Naive thymus-derived CD8-positive, alpha-beta T cell (primary cell): ENCODE measurements at regions of chr6 and their contacts with region 1.

Region 1: GRCh38 chr6:42928986-42929820 is at the start of gene CNPY3:
- DNase-seq: peak; percentile 87 to 97 (median 94)
- ATAC-seq: peak; percentile 82
- H3K4me3 Mint-ChIP-seq: peak within 1 kb of the TSS; percentile 92 to 100 (median 96)
- H3K27ac Mint-ChIP-seq: peak within 1 kb of the TSS; percentile 97 to 100 (median 99)
- H3K4me1 Mint-ChIP-seq: peaks cover 32 to 59% (median 55%) of the 10 kb centered on the region in 4 donors
- H3K27me3 Mint-ChIP-seq: no peaks in the 10 kb centered on the region
- polyA plus RNA-seq, gene CNPY3: 90.3 to 158 (median 124) TPM

Region 2: GRCh38 chr6:42050266-42051032 is 878.8 kb before region 1 on chr6 and contains the start of gene TAF8:
- POLR2A ChIA-PET with region 1: interaction called, 10 read pairs
- DNase-seq: peak; percentile 81 to 96 (median 86)
- ATAC-seq: peak; percentile 57 to 61
- H3K4me3 Mint-ChIP-seq: peak within 1 kb of the TSS; percentile 94 to 99 (median 98)
- H3K27ac Mint-ChIP-seq: peak within 1 kb of the TSS; percentile 94 to 99 (median 96)
- H3K4me1 Mint-ChIP-seq: peaks cover 15 to 83% (median 62%) of the 10 kb centered on the region in 4 donors
- H3K27me3 Mint-ChIP-seq: no peaks in the 10 kb centered on the region
- polyA plus RNA-seq, gene TAF8: 24.4 to 36.8 (median 28.6) TPM

Region 3: GRCh38 chr6:42782622-42783176 is 146.5 kb before region 1 on chr6:
- POLR2A ChIA-PET with region 1: interaction called, 11 read pairs
- DNase-seq: peak in 9 of 10 donors; percentile 68 to 93 (median 75)
- ATAC-seq: peak; percentile 49 to 61
- H3K4me3 Mint-ChIP-seq: peak overlapping the region in 9 of 10 donors; percentile 95 to 100 (median 99)
- H3K27ac Mint-ChIP-seq: peak overlapping the region in 8 of 10 donors; percentile 98 to 100 (median 100)
- H3K4me1 Mint-ChIP-seq: peaks cover 12 to 30% (median 22%) of the 10 kb centered on the region in 4 donors
- H3K27me3 Mint-ChIP-seq: no peaks in the 10 kb centered on the region

Region 4: GRCh38 chr6:42796171-42796570 is 133.0 kb before region 1 on chr6:
- POLR2A ChIA-PET with region 1: no interaction called
- DNase-seq: no peak
- ATAC-seq: peak in 1 of 2 donors; percentile 24
- H3K4me3 Mint-ChIP-seq: peak overlapping the region in 1 of 10 donors; percentile 55
- H3K27ac Mint-ChIP-seq: peak overlapping the region in 9 of 10 donors; percentile 2 to 78 (median 27)
- H3K4me1 Mint-ChIP-seq: peaks cover 11 to 31% (median 25%) of the 10 kb centered on the region in 4 donors
- H3K27me3 Mint-ChIP-seq: no peaks in the 10 kb centered on the region

Region 5: GRCh38 chr6:42963855-42964605 is 34.8 kb after region 1 on chr6:
- POLR2A ChIA-PET with region 1: interaction called, 16 read pairs
- DNase-seq: peak in 4 of 10 donors; percentile 10 to 44 (median 29)
- ATAC-seq: no peak
- H3K4me3 Mint-ChIP-seq: peak overlapping the region in 1 of 10 donors; percentile 6
- H3K27ac Mint-ChIP-seq: peak overlapping the region in 2 of 10 donors; percentile 65 to 66
- H3K4me1 Mint-ChIP-seq: peaks cover 16 to 27% (median 21%) of the 10 kb centered on the region in 4 donors
- H3K27me3 Mint-ChIP-seq: peaks cover 0 to 2% (median 0%) of the 10 kb centered on the region in 5 donors

Region 6: GRCh38 chr6:43005844-43006243 is 76.6 kb after region 1 on chr6:
- POLR2A ChIA-PET with region 1: interaction called, 109 read pairs
- DNase-seq: no peak
- ATAC-seq: no peak
- H3K4me3 Mint-ChIP-seq: no peak overlapping the region
- H3K27ac Mint-ChIP-seq: peak overlapping the region in 4 of 10 donors; percentile 6 to 60 (median 32)
- H3K4me1 Mint-ChIP-seq: peaks cover 3 to 17% (median 5%) of the 10 kb centered on the region in 4 donors
- H3K27me3 Mint-ChIP-seq: no peaks in the 10 kb centered on the region

Region 7: DNA sequence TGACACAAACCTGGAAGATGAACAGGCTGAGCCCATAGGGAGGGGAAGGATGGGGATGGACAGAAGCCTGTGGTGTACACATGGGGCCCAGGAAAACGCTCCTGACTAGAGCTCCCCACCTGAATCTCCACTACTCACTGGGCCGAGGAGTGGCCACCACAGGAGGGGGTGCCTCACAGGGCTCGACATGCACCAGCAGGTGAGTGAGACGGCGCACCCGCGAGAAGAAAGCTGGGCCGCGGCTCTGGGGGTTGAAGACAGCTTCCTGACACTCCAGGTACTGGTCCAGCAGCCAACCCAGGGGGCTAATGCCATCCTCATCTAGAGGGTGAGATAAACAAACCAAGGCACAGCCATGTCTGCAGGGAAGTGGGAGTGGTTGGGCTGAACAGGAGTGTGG is 114.1 kb after region 1 on chr6:
- POLR2A ChIA-PET with region 1: no interaction called
- DNase-seq: no peak
- ATAC-seq: no peak
- H3K4me3 Mint-ChIP-seq: no peak overlapping the region
- H3K27ac Mint-ChIP-seq: peak overlapping the region in 2 of 10 donors; percentile 19 to 45
- H3K4me1 Mint-ChIP-seq: peaks cover 0 to 9% (median 0%) of the 10 kb centered on the region in 4 donors
- H3K27me3 Mint-ChIP-seq: no peaks in the 10 kb centered on the region

Region 8: DNA sequence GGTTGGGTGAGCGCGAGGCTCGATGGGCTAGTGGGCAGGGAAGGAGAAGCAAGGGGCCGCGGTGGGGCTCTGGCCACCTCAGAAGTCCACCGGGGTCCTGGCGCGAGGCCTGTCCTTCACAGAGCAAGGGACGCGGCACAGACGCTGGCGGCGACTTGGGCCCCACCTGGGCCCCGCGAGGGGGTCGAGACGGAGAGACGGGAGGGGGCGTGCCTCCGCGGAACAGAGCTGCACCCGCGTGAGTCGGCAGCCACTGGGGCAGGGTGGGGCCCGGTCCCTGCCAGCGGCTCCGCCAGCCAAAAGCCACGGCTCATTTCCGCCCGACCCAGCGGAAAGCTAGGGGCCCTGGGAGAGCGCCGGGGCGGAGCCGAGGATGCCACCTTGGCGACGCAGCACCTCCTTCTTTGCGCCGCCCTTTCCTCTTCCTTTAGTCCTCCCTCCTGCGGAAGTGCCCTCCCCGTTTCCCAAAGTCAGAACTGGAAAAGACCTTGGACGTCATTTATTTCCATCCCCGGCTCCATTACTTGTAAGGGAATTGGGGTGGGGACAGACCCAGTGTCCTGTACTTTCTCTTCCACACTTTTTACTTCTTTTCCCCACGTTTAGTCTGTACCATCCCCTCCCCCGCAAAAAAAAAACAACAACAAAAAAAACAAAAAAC is 124.5 kb after region 1 on chr6 and contains the start of gene CUL7:
- POLR2A ChIA-PET with region 1: interaction called, 34 read pairs
- DNase-seq: peak; percentile 81 to 94 (median 86)
- ATAC-seq: peak; percentile 99
- H3K4me3 Mint-ChIP-seq: peak within 1 kb of the TSS; percentile 88 to 97 (median 94)
- H3K27ac Mint-ChIP-seq: peak within 1 kb of the TSS; percentile 80 to 98 (median 96)
- H3K4me1 Mint-ChIP-seq: peaks cover 34 to 54% (median 53%) of the 10 kb centered on the region in 4 donors
- H3K27me3 Mint-ChIP-seq: no peaks in the 10 kb centered on the region
- polyA plus RNA-seq, gene CUL7: 1.6 to 3.5 (median 1.6) TPM

Region 9: GRCh38 chr6:43386492-43386891 is 457.3 kb after region 1 on chr6:
- POLR2A ChIA-PET with region 1: interaction called, 10 read pairs
- DNase-seq: peak in 2 of 10 donors; percentile 45 to 62
- ATAC-seq: no peak
- H3K4me3 Mint-ChIP-seq: no peak overlapping the region
- H3K27ac Mint-ChIP-seq: peak overlapping the region in 8 of 10 donors; percentile 26 to 88 (median 52)
- H3K4me1 Mint-ChIP-seq: peaks cover 28 to 71% (median 66%) of the 10 kb centered on the region in 4 donors
- H3K27me3 Mint-ChIP-seq: peaks cover 2 to 13% (median 3%) of the 10 kb centered on the region in 5 donors